T-cell (primary cell): ENCODE measurements at regions of chr17 and their contacts with region 1.

Region 1: GRCh38 chr17:7809086-7809790 is 24.8 kb upstream of the KDM6B start:
- DNase-seq: no peak
- ATAC-seq: no peak
- H3K4me3 ChIP-seq: no peak overlapping the region
- H3K4me3 Mint-ChIP-seq: no peak overlapping the region
- H3K27ac ChIP-seq: no peak overlapping the region
- H3K27ac Mint-ChIP-seq: no peak overlapping the region
- H3K4me1 ChIP-seq: no peaks in the 10 kb centered on the region
- H3K4me1 Mint-ChIP-seq: peaks cover 3 to 9% (median 7%) of the 10 kb centered on the region in 3 donors
- H3K27me3 ChIP-seq: peaks cover 0 to 29% of the 10 kb centered on the region in 2 experiments
- H3K27me3 Mint-ChIP-seq: peaks cover 4 to 17% of the 10 kb centered on the region in 2 donors

Region 2: GRCh38 chr17:7214300-7215135 is 594.7 kb before region 1 on chr17:
- CTCF ChIA-PET with region 1: no interaction called
- POLR2A ChIA-PET with region 1: no interaction called
- DNase-seq: peak; percentile 89 to 100 (median 96)
- ATAC-seq: peak; percentile 78 to 81 (median 80)
- H3K4me3 ChIP-seq: peak overlapping the region; percentile 61 to 69
- H3K4me3 Mint-ChIP-seq: peak overlapping the region; percentile 86 to 92 (median 88)
- H3K27ac ChIP-seq: peak overlapping the region; percentile 96
- H3K27ac Mint-ChIP-seq: peak overlapping the region; percentile 95 to 99
- H3K4me1 ChIP-seq: peaks cover 36 to 61% of the 10 kb centered on the region in 2 experiments
- H3K4me1 Mint-ChIP-seq: peaks cover 62 to 67% (median 64%) of the 10 kb centered on the region in 3 donors
- H3K27me3 ChIP-seq: no peaks in the 10 kb centered on the region
- H3K27me3 Mint-ChIP-seq: peaks cover 0 to 5% of the 10 kb centered on the region in 2 donors

Region 3: DNA sequence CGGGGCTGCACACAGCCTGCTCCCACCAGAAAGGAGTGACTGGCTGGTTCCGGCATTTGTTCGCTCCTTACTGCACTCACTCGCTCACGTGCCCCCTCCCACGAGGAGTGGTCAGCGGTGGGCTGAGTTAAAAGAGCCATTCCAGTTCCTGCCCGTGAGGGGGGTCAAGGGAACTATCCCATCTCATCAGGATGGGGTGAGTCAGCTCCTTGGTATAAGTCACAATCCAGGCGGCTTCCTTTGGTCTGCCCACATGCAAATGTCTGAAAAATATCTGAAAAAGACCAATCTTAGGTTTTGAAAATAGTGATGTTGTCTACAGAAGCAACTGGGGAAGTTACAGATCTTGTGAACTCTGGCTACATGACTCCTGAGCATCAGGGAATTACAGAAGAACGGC is 270.3 kb before region 1 on chr17:
- CTCF ChIA-PET with region 1: no interaction called
- POLR2A ChIA-PET with region 1: no interaction called
- DNase-seq: no peak
- ATAC-seq: no peak
- H3K4me3 ChIP-seq: no peak overlapping the region
- H3K4me3 Mint-ChIP-seq: no peak overlapping the region
- H3K27ac ChIP-seq: no peak overlapping the region
- H3K27ac Mint-ChIP-seq: no peak overlapping the region
- H3K4me1 ChIP-seq: no peaks in the 10 kb centered on the region
- H3K4me1 Mint-ChIP-seq: no peaks in the 10 kb centered on the region
- H3K27me3 ChIP-seq: peaks cover 0 to 6% of the 10 kb centered on the region in 2 experiments
- H3K27me3 Mint-ChIP-seq: no peaks in the 10 kb centered on the region

Region 4: DNA sequence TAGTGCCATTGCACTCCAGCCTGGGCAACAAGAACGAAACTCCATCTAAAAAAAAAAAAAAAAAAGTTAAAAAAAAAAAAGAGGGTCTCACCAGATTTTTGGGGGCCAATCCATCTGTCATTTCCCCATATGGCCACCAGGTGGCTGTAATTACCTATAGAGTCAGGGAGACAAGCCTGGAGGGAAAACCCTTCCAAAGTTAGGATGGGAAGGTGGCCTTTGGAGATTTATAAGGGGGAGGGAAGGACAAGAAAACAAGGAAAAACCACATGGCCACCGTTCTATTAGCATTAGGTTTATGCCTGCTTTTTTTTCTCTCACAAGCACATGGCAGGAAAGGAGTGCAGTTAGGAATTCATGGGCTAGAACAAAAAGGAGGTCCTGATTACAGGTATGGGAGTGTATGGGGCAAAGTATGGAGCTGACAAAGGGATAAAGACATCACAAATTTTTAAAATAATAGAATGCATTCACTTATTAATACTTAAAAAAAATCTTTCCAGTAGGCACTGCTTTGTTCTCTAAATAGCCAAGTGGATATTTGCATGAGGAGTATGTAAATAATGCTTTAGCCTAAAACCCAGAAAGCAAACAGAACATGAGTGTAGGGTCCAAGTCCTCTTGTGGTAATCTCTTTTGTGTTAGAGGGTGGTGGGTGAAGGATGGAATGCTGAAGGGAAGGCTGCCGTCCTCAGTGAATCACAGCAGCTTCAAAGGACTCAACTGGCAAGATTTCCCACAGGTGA is 53.6 kb after region 1 on chr17:
- CTCF ChIA-PET with region 1: interaction called in 1 of 2 experiments, 11 read pairs
- POLR2A ChIA-PET with region 1: no interaction called
- DNase-seq: peak in 6 of 35 experiments; percentile 39 to 71 (median 48)
- ATAC-seq: no peak
- H3K4me3 ChIP-seq: no peak overlapping the region
- H3K4me3 Mint-ChIP-seq: no peak overlapping the region
- H3K27ac ChIP-seq: no peak overlapping the region
- H3K27ac Mint-ChIP-seq: no peak overlapping the region
- H3K4me1 ChIP-seq: peaks cover 10 to 23% of the 10 kb centered on the region in 2 experiments
- H3K4me1 Mint-ChIP-seq: peaks cover 15 to 23% (median 19%) of the 10 kb centered on the region in 3 donors
- H3K27me3 ChIP-seq: no peaks in the 10 kb centered on the region
- H3K27me3 Mint-ChIP-seq: no peaks in the 10 kb centered on the region

Region 5: GRCh38 chr17:7889166-7889955 is 80.1 kb after region 1 on chr17:
- CTCF ChIA-PET with region 1: no interaction called
- POLR2A ChIA-PET with region 1: no interaction called
- DNase-seq: peak in 19 of 35 experiments; percentile 11 to 56 (median 21)
- ATAC-seq: no peak
- H3K4me3 ChIP-seq: no peak overlapping the region
- H3K4me3 Mint-ChIP-seq: no peak overlapping the region
- H3K27ac ChIP-seq: no peak overlapping the region
- H3K27ac Mint-ChIP-seq: no peak overlapping the region
- H3K4me1 ChIP-seq: peaks cover 6 to 42% of the 10 kb centered on the region in 2 experiments
- H3K4me1 Mint-ChIP-seq: peaks cover 7 to 15% (median 9%) of the 10 kb centered on the region in 3 donors
- H3K27me3 ChIP-seq: no peaks in the 10 kb centered on the region
- H3K27me3 Mint-ChIP-seq: no peaks in the 10 kb centered on the region

Region 6: DNA sequence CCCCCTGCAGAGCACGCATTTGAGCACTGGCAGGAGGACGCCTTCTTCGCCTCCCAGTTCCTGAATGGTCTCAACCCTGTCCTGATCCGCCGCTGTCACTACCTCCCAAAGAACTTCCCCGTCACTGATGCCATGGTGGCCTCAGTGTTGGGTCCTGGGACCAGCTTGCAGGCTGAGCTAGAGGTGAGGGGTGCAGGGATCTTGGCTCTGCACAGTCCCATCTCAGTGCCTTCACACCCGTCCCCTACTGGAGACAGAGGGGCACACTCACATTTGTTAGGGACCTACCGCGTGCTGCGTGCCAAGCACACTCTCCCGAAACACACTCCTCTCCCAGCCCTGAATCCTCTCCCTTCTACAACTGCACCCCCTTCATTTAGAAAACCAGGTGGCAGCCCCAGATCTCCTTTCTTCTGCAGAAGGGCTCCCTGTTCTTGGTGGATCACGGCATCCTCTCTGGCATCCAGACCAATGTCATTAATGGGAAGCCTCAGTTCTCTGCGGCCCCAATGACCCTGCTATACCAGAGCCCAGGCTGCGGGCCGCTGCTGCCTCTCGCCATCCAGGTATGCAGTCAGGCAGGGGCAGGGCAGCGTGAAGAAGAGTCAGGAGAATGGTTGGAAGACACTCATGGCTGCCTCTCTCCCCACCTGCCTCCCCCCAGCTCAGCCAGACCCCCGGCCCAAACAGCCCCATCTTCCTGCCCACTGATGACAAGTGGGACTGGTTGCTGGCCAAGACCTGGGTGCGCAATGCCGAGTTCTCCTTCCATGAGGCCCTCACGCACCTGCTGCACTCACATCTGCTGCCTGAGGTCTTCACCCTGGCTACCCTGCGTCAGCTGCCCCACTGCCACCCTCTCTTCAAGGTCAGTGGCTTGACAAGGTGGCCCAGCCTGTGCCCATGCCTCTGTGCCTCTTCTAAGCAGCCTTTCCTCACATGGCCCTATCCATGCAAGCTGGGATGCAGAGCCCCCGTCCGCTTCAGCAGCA is 235.9 kb after region 1 on chr17:
- CTCF ChIA-PET with region 1: no interaction called
- POLR2A ChIA-PET with region 1: no interaction called
- DNase-seq: no peak
- ATAC-seq: no peak
- H3K4me3 ChIP-seq: no peak overlapping the region
- H3K4me3 Mint-ChIP-seq: no peak overlapping the region
- H3K27ac ChIP-seq: no peak overlapping the region
- H3K27ac Mint-ChIP-seq: no peak overlapping the region
- H3K4me1 ChIP-seq: no peaks in the 10 kb centered on the region
- H3K4me1 Mint-ChIP-seq: peaks cover 0 to 9% (median 0%) of the 10 kb centered on the region in 3 donors
- H3K27me3 ChIP-seq: peaks cover 0 to 45% of the 10 kb centered on the region in 2 experiments
- H3K27me3 Mint-ChIP-seq: peaks cover 0 to 14% of the 10 kb centered on the region in 2 donors